A549 (cell line): ENCODE measurements at regions of chr20 and their contacts with region 1.

Region 1: GRCh38 chr20:19916531-19917485 is 100.4 kb upstream of the NAA20 start:
- DNase-seq: no peak
- ATAC-seq: no peak
- H3K4me3 ChIP-seq: no peak overlapping the region
- H3K27ac ChIP-seq: no peak overlapping the region
- H3K4me1 ChIP-seq: peaks cover 31% of the 10 kb centered on the region
- CTCF ChIP-seq: no peak
- EP300 ChIP-seq: no peak
- POLR2A ChIP-seq: no peak
- RAD21 ChIP-seq: no peak

Region 2: GRCh38 chr20:19903168-19903811 is 13.5 kb before region 1 on chr20:
- CTCF ChIA-PET with region 1: interaction called, 10 read pairs
- POLR2A ChIA-PET with region 1: no interaction called
- DNase-seq: peak in 1 of 2 experiments; percentile 52
- ATAC-seq: peak in 1 of 2 experiments; percentile 51; a peak in 3 of 6 replicates
- H3K4me3 ChIP-seq: no peak overlapping the region
- H3K27ac ChIP-seq: 0 out of 6 replicates have a peak overlapping the region, but pooled peaks of 1 of the 2 experiments have one; percentile 24
- H3K4me1 ChIP-seq: peaks cover 15% of the 10 kb centered on the region
- CTCF ChIP-seq: no peak
- EP300 ChIP-seq: no peak
- POLR2A ChIP-seq: no peak
- RAD21 ChIP-seq: peak in 1 of 2 experiments; percentile 45; a peak in 2 of 5 replicates

Region 3: GRCh38 chr20:20130399-20130798 is 213.6 kb after region 1 on chr20:
- CTCF ChIA-PET with region 1: no interaction called
- POLR2A ChIA-PET with region 1: no interaction called
- DNase-seq: peak in 1 of 2 experiments; percentile 48
- ATAC-seq: peak in 1 of 2 experiments; percentile 56; a peak in 3 of 6 replicates
- H3K4me3 ChIP-seq: no peak overlapping the region
- H3K27ac ChIP-seq: no peak overlapping the region
- H3K4me1 ChIP-seq: no peaks in the 10 kb centered on the region
- CTCF ChIP-seq: 0 out of 3 replicates have a peak, but pooled peaks have one; percentile 20
- EP300 ChIP-seq: no peak
- POLR2A ChIP-seq: no peak
- RAD21 ChIP-seq: peak in 1 of 2 experiments; percentile 71; a peak in 3 of 5 replicates